IMR-90 (cell line): ENCODE measurements at regions of chr9 and their contacts with region 1.

Region 1: GRCh38 chr9:108864454-108864853 is 2.4 kb downstream of the ACTL7A start:
- DNase-seq: no peak
- ATAC-seq: no peak
- H3K4me3 ChIP-seq: no peak overlapping the region
- H3K27ac ChIP-seq: no peak overlapping the region
- H3K4me1 ChIP-seq: peaks cover 5% of the 10 kb centered on the region; the same call in 1 of the 2 replicates
- H3K27me3 ChIP-seq: no peaks in the 10 kb centered on the region
- CTCF ChIP-seq: no peak
- POLR2A ChIP-seq: no peak
- RAD21 ChIP-seq: no peak

Region 2: DNA sequence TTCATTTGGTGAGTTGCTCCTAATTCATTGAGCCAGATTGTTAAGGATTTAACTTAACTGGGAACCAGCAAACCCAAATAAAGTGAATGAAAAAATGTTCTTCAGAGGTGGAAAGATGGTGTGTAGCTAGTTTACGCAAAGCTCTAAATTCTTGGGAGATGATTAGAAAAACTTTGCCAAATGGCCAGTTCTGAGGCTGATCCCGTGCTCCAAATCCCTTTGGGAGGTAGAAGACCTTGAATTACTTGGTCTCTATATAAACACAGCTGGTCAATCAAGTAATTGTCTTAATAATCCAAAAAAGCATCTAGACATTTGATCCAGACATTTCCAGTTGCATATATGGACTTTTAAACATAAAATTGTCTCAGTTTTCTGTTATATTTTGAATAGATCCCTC is 20.1 kb before region 1 on chr9:
- CTCF ChIA-PET with region 1: interaction called, 4 read pairs
- POLR2A ChIA-PET with region 1: no interaction called
- dilution Hi-C with region 1: no loop called
- in situ Hi-C with region 1: no loop called
- intact Hi-C with region 1: loop called (anchors 2 kb)
- DNase-seq: no peak
- ATAC-seq: no peak
- H3K4me3 ChIP-seq: no peak overlapping the region
- H3K27ac ChIP-seq: no peak overlapping the region
- H3K4me1 ChIP-seq: no peaks in the 10 kb centered on the region
- H3K27me3 ChIP-seq: no peaks in the 10 kb centered on the region; the same call in 1 of the 2 replicates
- CTCF ChIP-seq: no peak
- POLR2A ChIP-seq: no peak
- RAD21 ChIP-seq: no peak

Region 3: GRCh38 chr9:109166771-109167601 is 302.5 kb after region 1 on chr9 and contains the start of gene FRRS1L:
- CTCF ChIA-PET with region 1: no interaction called
- POLR2A ChIA-PET with region 1: no interaction called
- dilution Hi-C with region 1: no loop called
- in situ Hi-C with region 1: no loop called
- intact Hi-C with region 1: no loop called
- DNase-seq: no peak
- ATAC-seq: peak; percentile 63
- H3K4me3 ChIP-seq: peak within 1 kb of the TSS; percentile 20
- H3K27ac ChIP-seq: no peak within 1 kb of the TSS
- H3K4me1 ChIP-seq: no peaks in the 10 kb centered on the region
- H3K27me3 ChIP-seq: peaks cover 46% of the 10 kb centered on the region
- CTCF ChIP-seq: no peak
- POLR2A ChIP-seq: no peak
- RAD21 ChIP-seq: no peak
- total RNA-seq, gene FRRS1L: under 0.01 TPM in 1 of 2 replicates, not detected in the other